CD4-positive, alpha-beta T cell (primary cell): ENCODE measurements at regions of chr9 and their contacts with region 1.

Region 1: GRCh38 chr9:134024828-134025605 is at the start of gene BRD3OS:
- DNase-seq: peak; percentile 83 to 98 (median 92)
- ATAC-seq: peak; percentile 88
- H3K4me3 ChIP-seq: peak within 1 kb of the TSS; percentile 82
- H3K4me3 Mint-ChIP-seq: peak within 1 kb of the TSS; percentile 88
- H3K27ac ChIP-seq: peak within 1 kb of the TSS; percentile 30 to 34
- H3K27ac Mint-ChIP-seq: peak within 1 kb of the TSS; percentile 27
- H3K4me1 ChIP-seq: peaks cover 13% of the 10 kb centered on the region
- H3K4me1 Mint-ChIP-seq: no peaks in the 10 kb centered on the region
- H3K27me3 ChIP-seq: no peaks in the 10 kb centered on the region
- H3K27me3 Mint-ChIP-seq: no peaks in the 10 kb centered on the region
- CTCF ChIP-seq: no peak
- total RNA-seq, gene BRD3OS: 4.0 to 4.9 TPM

Region 2: GRCh38 chr9:133459476-133460404 is 565.3 kb before region 1 on chr9 and contains the start of gene CACFD1:
- CTCF ChIA-PET with region 1: no interaction called
- POLR2A ChIA-PET with region 1: no interaction called
- intact Hi-C with region 1: loop called in 1 of 2 experiments (anchors 10 kb)
- DNase-seq: peak; percentile 83 to 97 (median 90)
- ATAC-seq: peak; percentile 80
- H3K4me3 ChIP-seq: peak within 1 kb of the TSS; percentile 69
- H3K4me3 Mint-ChIP-seq: peak within 1 kb of the TSS; percentile 95
- H3K27ac ChIP-seq: peak within 1 kb of the TSS; percentile 52 to 82
- H3K27ac Mint-ChIP-seq: peak within 1 kb of the TSS; percentile 97
- H3K4me1 ChIP-seq: peaks cover 18% of the 10 kb centered on the region
- H3K4me1 Mint-ChIP-seq: peaks cover 23% of the 10 kb centered on the region
- H3K27me3 ChIP-seq: no peaks in the 10 kb centered on the region
- H3K27me3 Mint-ChIP-seq: no peaks in the 10 kb centered on the region
- CTCF ChIP-seq: no peak
- total RNA-seq, gene CACFD1: 3.7 to 3.8 TPM

Region 3: GRCh38 chr9:134067904-134068743 is 43.1 kb after region 1 on chr9 and contains the start of gene BRD3:
- CTCF ChIA-PET with region 1: interaction called, 3 read pairs
- POLR2A ChIA-PET with region 1: interaction called, 9 read pairs
- intact Hi-C with region 1: loop called (anchors 1 kb)
- DNase-seq: peak; percentile 63 to 96 (median 78)
- ATAC-seq: peak; percentile 76
- H3K4me3 ChIP-seq: peak within 1 kb of the TSS; percentile 79
- H3K4me3 Mint-ChIP-seq: peak within 1 kb of the TSS; percentile 97
- H3K27ac ChIP-seq: peak within 1 kb of the TSS; percentile 79 to 84
- H3K27ac Mint-ChIP-seq: peak within 1 kb of the TSS; percentile 98
- H3K4me1 ChIP-seq: peaks cover 47% of the 10 kb centered on the region
- H3K4me1 Mint-ChIP-seq: peaks cover 37% of the 10 kb centered on the region
- H3K27me3 ChIP-seq: peaks cover 9 to 15% of the 10 kb centered on the region in 2 experiments
- H3K27me3 Mint-ChIP-seq: peaks cover 22% of the 10 kb centered on the region
- CTCF ChIP-seq: no peak
- total RNA-seq, gene BRD3: 26.7 to 29.0 TPM

Region 4: DNA sequence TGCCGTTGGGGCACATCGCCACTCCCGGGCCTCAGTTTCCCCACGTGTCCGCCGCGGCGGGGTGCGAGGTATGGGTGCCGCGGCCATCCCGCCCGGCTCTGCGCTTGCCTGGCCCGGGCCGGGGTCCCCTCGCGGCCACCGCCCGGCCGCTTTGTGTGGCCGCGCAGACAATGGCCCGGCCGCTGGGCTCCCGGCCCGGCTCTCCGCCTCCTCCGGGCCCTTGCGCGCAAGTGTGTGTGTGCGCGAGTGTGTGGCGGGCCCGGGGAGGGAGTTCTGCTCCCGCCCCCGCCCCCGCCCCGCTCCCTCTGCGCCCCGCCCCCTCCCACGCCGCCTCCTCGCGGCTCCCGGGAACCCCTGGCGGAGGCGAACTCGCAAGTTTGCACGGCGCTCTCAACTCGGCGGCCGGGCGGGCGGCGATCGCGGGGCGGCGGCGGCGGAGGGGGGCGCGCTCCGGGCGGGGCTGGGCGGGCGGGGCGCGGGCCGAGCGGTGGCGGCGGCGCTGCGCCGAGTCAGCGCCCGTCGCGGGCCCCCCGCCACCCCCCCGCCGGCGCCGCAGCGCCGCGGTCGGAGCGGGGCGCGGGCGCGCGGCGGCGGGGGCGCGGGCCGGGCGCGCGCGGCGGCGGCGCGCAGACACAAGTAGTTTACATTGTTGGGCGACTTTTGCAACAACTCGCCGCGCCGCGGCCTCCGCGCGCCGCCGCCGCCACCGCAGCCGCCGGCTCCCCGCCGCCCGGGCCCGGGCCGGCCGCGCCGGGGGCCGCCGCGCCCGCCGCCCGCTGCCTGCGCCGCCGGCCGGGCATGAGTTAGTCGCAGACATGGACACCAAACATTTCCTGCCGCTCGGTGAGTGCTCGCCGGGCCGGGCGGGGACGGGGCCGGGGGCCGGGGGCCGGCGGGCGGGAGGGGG is 301.1 kb after region 1 on chr9 and contains the start of gene RXRA:
- CTCF ChIA-PET with region 1: no interaction called
- POLR2A ChIA-PET with region 1: no interaction called
- intact Hi-C with region 1: loop called in 1 of 2 experiments (anchors 5 kb)
- DNase-seq: peak; percentile 47 to 90 (median 66)
- ATAC-seq: peak; percentile 71
- H3K4me3 ChIP-seq: peak within 1 kb of the TSS; percentile 86
- H3K4me3 Mint-ChIP-seq: peak within 1 kb of the TSS; percentile 83
- H3K27ac ChIP-seq: peak within 1 kb of the TSS in 1 of 2 donors; percentile 2
- H3K27ac Mint-ChIP-seq: peak within 1 kb of the TSS; percentile 20
- H3K4me1 ChIP-seq: peaks cover 25% of the 10 kb centered on the region
- H3K4me1 Mint-ChIP-seq: peaks cover 8% of the 10 kb centered on the region
- H3K27me3 ChIP-seq: no peaks in the 10 kb centered on the region
- H3K27me3 Mint-ChIP-seq: no peaks in the 10 kb centered on the region
- CTCF ChIP-seq: no peak
- total RNA-seq, gene RXRA: 7.3 to 8.4 TPM

Region 5: GRCh38 chr9:135009711-135010584 is 984.9 kb after region 1 on chr9:
- CTCF ChIA-PET with region 1: no interaction called
- POLR2A ChIA-PET with region 1: no interaction called
- intact Hi-C with region 1: no loop called
- DNase-seq: no peak
- ATAC-seq: no peak
- H3K4me3 ChIP-seq: no peak overlapping the region
- H3K4me3 Mint-ChIP-seq: no peak overlapping the region
- H3K27ac ChIP-seq: no peak overlapping the region
- H3K27ac Mint-ChIP-seq: no peak overlapping the region
- H3K4me1 ChIP-seq: no peaks in the 10 kb centered on the region
- H3K4me1 Mint-ChIP-seq: no peaks in the 10 kb centered on the region
- H3K27me3 ChIP-seq: peaks cover 0 to 3% of the 10 kb centered on the region in 2 experiments
- H3K27me3 Mint-ChIP-seq: no peaks in the 10 kb centered on the region
- CTCF ChIP-seq: no peak